ENCODE measurements at regions of chr12 and their contacts with region 1.

Region 1: GRCh38 chr12:9331218-9331626 is 123.0 kb upstream of the PZP start:
- DNase-seq: peak; percentile 78
- H3K4me3 Mint-ChIP-seq: no peak overlapping the region
- H3K27ac Mint-ChIP-seq: no peak overlapping the region
- H3K4me1 Mint-ChIP-seq: peaks cover 15% of the 10 kb centered on the region
- H3K27me3 Mint-ChIP-seq: no peaks in the 10 kb centered on the region

Region 2: GRCh38 chr12:9064201-9064814 is 266.9 kb before region 1 on chr12:
- CTCF ChIA-PET with region 1: interaction called, 3 read pairs
- intact Hi-C with region 1: loop called (anchors 5 kb)
- DNase-seq: peak; percentile 78
- H3K4me3 Mint-ChIP-seq: peak overlapping the region; percentile 69
- H3K27ac Mint-ChIP-seq: no peak overlapping the region
- H3K4me1 Mint-ChIP-seq: peaks cover 7% of the 10 kb centered on the region
- H3K27me3 Mint-ChIP-seq: peaks cover 2% of the 10 kb centered on the region

Region 3: DNA sequence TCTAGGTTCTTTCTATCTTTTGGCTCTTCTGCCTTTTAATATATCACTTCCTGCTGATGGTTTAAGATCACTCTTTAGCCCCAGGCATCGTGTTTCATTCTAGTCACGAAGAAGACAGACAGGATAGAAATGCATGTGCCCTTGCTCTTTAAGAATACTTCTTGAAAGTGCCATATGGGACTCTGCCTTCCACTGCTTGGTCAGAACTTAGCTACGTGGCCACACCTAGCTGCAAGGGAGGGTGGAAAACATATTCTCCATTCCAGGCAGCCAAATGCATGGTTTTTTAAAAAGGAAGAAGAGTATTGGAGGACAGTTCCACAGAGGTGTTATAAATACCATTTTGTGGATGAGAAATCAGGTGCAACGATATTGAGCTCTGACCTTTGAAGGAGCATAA is 133.2 kb after region 1 on chr12:
- CTCF ChIA-PET with region 1: interaction called, 11 read pairs
- intact Hi-C with region 1: loop called (anchors 1 kb)
- DNase-seq: no peak
- H3K4me3 Mint-ChIP-seq: no peak overlapping the region
- H3K27ac Mint-ChIP-seq: no peak overlapping the region
- H3K4me1 Mint-ChIP-seq: peaks cover 9% of the 10 kb centered on the region
- H3K27me3 Mint-ChIP-seq: no peaks in the 10 kb centered on the region

Region 4: GRCh38 chr12:9615420-9616136 is 284.4 kb after region 1 on chr12:
- CTCF ChIA-PET with region 1: interaction called, 3 read pairs
- intact Hi-C with region 1: loop called (anchors 5 kb)
- DNase-seq: no peak
- H3K4me3 Mint-ChIP-seq: peak overlapping the region; percentile 34
- H3K27ac Mint-ChIP-seq: peak overlapping the region; percentile 65
- H3K4me1 Mint-ChIP-seq: peaks cover 54% of the 10 kb centered on the region
- H3K27me3 Mint-ChIP-seq: no peaks in the 10 kb centered on the region